ENCODE measurements at regions of chr3 and their contacts with region 1.

Region 1: DNA sequence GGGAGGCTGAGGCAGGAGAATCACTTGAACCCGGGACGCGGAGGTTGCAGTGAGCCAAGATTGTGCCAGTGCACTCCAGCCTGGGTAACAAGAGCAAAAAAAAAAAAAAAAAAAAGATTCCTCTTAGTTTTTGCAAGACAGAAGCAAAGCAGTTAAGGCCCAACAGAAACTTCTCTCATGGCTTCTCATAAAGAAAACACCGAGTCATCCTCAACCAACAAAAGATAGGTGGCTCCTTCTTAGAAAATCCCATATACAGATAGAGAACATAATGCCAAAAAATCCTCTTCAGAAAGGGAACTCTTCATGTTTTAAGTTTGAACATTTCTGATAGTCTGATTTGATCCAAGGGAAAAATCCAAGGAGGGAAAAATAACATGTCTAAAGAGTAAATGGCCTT is 12.5 kb upstream of the SKIL start:
- DNase-seq: no peak
- ATAC-seq: no peak
- H3K4me3 ChIP-seq: no peak overlapping the region
- H3K27ac ChIP-seq: peak overlapping the region; percentile 44; the same call in 1 of the 2 replicates
- H3K4me1 ChIP-seq: peaks cover 15% of the 10 kb centered on the region
- H3K27me3 ChIP-seq: no peaks in the 10 kb centered on the region
- CTCF ChIP-seq: no peak

Region 2: DNA sequence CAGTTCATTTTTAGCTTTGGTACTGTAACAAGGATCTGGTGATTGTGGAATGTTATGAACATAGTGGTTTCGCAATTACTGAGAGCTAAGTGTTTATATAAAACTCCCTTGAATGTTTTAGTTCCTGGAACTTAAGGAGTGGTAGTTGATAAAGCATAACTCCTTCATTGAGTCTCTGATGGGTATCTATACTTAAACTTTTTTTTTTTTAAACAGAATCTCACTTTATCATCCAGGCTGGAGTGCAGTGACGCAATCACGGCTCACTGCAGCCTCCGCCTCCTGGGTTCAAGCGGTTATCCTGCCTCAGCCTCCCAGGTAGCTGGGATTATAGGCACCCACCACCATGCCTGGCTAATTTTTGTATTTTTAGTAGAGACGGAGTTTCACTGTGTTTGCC is 111.4 kb before region 1 on chr3:
- CTCF ChIA-PET with region 1: no interaction called
- POLR2A ChIA-PET with region 1: no interaction called
- in situ Hi-C with region 1: no loop called
- intact Hi-C with region 1: no loop called
- DNase-seq: no peak
- ATAC-seq: no peak
- H3K4me3 ChIP-seq: no peak overlapping the region
- H3K27ac ChIP-seq: no peak overlapping the region
- H3K4me1 ChIP-seq: no peaks in the 10 kb centered on the region
- H3K27me3 ChIP-seq: no peaks in the 10 kb centered on the region
- CTCF ChIP-seq: no peak

Region 3: DNA sequence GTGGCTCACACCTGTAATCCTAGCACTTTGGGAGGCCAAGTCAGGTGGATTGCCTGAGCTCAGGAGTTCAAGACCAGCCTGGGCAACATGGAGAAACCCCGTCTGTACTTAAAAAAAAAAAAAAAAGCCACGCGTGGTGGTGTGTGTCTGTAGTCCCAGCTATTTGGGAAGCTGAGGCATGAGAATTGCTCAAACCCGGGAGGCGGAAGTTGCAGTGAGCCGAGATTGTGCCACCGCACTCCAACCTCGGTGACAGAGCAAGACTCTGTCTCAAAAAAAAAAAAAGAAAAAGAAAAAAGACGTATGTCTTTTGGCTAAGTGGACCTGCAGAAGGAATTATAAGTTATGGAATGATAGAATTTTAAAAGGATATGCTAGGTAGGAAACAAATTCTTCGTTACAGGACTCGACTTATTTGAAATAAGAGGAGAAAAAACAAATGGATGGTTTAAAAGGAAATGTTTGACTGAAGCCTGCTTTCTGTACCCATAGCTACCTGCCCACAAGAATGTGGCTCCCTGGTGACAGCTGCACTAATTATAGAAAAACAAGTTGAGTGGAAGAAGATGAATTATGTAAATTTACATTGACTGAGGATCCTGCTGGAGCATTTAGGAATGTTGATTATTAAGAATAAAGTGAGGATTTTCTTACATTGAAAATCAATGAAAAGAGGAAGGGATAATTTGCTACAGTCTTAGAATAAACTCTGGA is 23.5 kb before region 1 on chr3:
- CTCF ChIA-PET with region 1: interaction called, 11 read pairs
- POLR2A ChIA-PET with region 1: no interaction called
- in situ Hi-C with region 1: no loop called
- intact Hi-C with region 1: no loop called
- DNase-seq: no peak
- ATAC-seq: no peak
- H3K4me3 ChIP-seq: no peak overlapping the region
- H3K27ac ChIP-seq: no peak overlapping the region
- H3K4me1 ChIP-seq: peaks cover 4% of the 10 kb centered on the region; the same call in 1 of the 2 replicates
- H3K27me3 ChIP-seq: no peaks in the 10 kb centered on the region
- CTCF ChIP-seq: no peak